Vagina (tissue), 2 donors: ENCODE measurements at regions of chr6 and their contacts with region 1.

Region 1: DNA sequence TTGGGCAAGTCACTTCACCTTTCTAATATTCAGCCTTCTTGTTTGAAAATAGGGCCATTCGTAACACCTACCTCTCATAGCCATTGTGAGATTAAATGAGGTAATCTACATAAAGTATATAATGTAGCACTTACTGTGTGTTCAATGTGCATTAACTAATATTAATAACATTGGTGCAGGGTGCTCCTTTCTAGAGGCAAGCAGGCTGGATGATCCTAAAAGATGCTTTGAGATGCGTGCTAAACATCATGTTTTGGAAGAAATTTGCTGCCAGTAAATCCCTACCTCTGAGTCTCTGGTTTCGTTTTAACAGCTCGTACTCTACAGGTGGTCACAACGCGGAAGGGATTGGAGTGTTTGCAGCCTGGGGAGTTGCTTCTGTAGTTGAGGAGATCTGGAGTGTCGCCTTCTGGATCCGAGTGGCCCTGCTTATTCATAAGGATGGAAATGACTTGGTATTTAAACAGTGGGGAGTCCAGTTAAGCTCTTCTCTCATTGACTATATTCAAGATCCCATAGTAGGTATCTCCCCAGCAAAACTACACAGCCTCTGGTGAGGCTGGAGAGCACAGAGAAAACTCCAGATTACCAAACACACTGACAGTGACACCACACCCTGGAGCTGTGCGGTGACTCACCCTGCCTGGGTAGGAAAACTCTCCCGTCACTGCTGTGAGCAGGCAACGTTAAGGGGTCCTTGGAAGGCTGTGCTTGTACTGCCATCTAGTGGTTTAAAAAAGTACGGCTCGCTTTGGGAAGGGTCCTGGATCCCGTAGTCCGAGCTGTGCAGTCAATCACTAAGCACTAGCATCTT is 107.9 kb downstream of the MAP3K7 start:
- DNase-seq: peak in 1 of 2 donors; percentile 97
- H3K4me3 ChIP-seq: no peak overlapping the region
- H3K27ac ChIP-seq: peak overlapping the region; percentile 31
- H3K4me1 ChIP-seq: peaks cover 6% of the 10 kb centered on the region
- H3K27me3 ChIP-seq: no peaks in the 10 kb centered on the region
- CTCF ChIP-seq: peak; percentile 79 to 96 (median 89)
- POLR2A ChIP-seq: no peak

Region 2: GRCh38 chr6:89954721-89955149 is 524.3 kb before region 1 on chr6:
- intact Hi-C with region 1: loop called (anchors 5 kb)
- DNase-seq: no peak
- H3K4me3 ChIP-seq: no peak overlapping the region
- H3K27ac ChIP-seq: no peak overlapping the region
- H3K4me1 ChIP-seq: no peaks in the 10 kb centered on the region
- H3K27me3 ChIP-seq: no peaks in the 10 kb centered on the region
- CTCF ChIP-seq: no peak
- POLR2A ChIP-seq: no peak

Region 3: GRCh38 chr6:90274451-90275030 is 204.5 kb before region 1 on chr6:
- intact Hi-C with region 1: no loop called
- DNase-seq: no peak
- H3K4me3 ChIP-seq: no peak overlapping the region
- H3K27ac ChIP-seq: no peak overlapping the region
- H3K4me1 ChIP-seq: no peaks in the 10 kb centered on the region
- H3K27me3 ChIP-seq: no peaks in the 10 kb centered on the region
- CTCF ChIP-seq: no peak
- POLR2A ChIP-seq: no peak

Region 4: GRCh38 chr6:90537723-90538258 is 58.8 kb after region 1 on chr6:
- intact Hi-C with region 1: no loop called
- DNase-seq: no peak
- H3K4me3 ChIP-seq: no peak overlapping the region
- H3K27ac ChIP-seq: no peak overlapping the region
- H3K4me1 ChIP-seq: no peaks in the 10 kb centered on the region
- H3K27me3 ChIP-seq: no peaks in the 10 kb centered on the region
- CTCF ChIP-seq: no peak
- POLR2A ChIP-seq: no peak